Activated CD4-positive, alpha-beta T cell treated with anti-CD3 and anti-CD28 coated beads for 36 hours (primary cell): ENCODE measurements at regions of chr3 and their contacts with region 1.

Region 1: GRCh38 chr3:121735047-121735696 is 14.4 kb downstream of the GOLGB1 start:
- DNase-seq: no peak
- ATAC-seq: peak; percentile 97
- H3K4me3 Mint-ChIP-seq: no peak overlapping the region
- H3K27ac Mint-ChIP-seq: no peak overlapping the region
- H3K4me1 Mint-ChIP-seq: peaks cover 46% of the 10 kb centered on the region
- H3K27me3 Mint-ChIP-seq: no peaks in the 10 kb centered on the region

Region 2: DNA sequence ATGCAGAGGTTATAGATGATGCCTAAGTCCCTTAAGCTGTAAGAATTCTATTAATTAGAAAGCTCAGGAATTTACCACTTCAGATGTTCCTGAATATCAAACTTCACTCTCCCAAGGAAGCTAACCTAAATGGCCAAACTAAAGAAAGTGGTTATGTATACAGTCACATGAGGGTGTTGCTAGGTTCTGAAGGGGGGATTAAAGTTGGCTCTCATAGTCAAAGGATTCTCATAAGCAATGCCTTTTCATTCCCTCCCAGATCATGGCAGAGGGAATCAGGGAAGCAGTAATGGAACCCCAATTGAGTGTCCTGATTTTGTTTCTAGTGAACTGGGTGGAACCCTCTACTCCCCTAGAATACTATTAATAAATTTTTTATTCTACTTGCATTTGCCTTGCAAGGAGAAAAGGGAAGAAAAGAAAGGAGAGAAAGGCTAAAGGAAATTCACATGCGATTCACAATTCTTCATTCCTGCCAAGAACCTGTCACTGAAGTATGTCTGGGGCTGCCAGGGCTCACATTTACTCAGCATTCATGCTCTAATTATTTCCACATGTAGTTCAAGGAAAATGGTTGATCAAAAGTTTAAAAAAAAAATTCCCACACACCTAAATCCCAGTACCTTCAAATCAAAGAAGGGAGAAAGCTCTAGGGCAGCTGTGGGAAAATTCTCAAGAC is 1309.5 kb before region 1 on chr3:
- CTCF ChIA-PET with region 1: no interaction called
- POLR2A ChIA-PET with region 1: no interaction called
- intact Hi-C with region 1: no loop called
- DNase-seq: no peak
- ATAC-seq: no peak
- H3K4me3 Mint-ChIP-seq: no peak overlapping the region
- H3K27ac Mint-ChIP-seq: no peak overlapping the region
- H3K4me1 Mint-ChIP-seq: no peaks in the 10 kb centered on the region
- H3K27me3 Mint-ChIP-seq: peaks cover 7% of the 10 kb centered on the region

Region 3: GRCh38 chr3:121654493-121655385 is 80.4 kb before region 1 on chr3:
- CTCF ChIA-PET with region 1: no interaction called
- POLR2A ChIA-PET with region 1: no interaction called
- intact Hi-C with region 1: loop called in 1 of 2 experiments (anchors 5 kb)
- DNase-seq: no peak
- ATAC-seq: peak; percentile 90
- H3K4me3 Mint-ChIP-seq: peak overlapping the region; percentile 13
- H3K27ac Mint-ChIP-seq: peak overlapping the region; percentile 91
- H3K4me1 Mint-ChIP-seq: peaks cover 80% of the 10 kb centered on the region
- H3K27me3 Mint-ChIP-seq: no peaks in the 10 kb centered on the region

Region 4: GRCh38 chr3:121749276-121750086 is 14.3 kb after region 1 on chr3 and contains the start of gene GOLGB1:
- CTCF ChIA-PET with region 1: interaction called, 3 read pairs
- POLR2A ChIA-PET with region 1: no interaction called
- intact Hi-C with region 1: loop called in 1 of 2 experiments (anchors 1 kb)
- DNase-seq: peak; percentile 96
- ATAC-seq: peak; percentile 98
- H3K4me3 Mint-ChIP-seq: no peak within 1 kb of the TSS
- H3K27ac Mint-ChIP-seq: peak within 1 kb of the TSS; percentile 60
- H3K4me1 Mint-ChIP-seq: peaks cover 10% of the 10 kb centered on the region
- H3K27me3 Mint-ChIP-seq: no peaks in the 10 kb centered on the region
- total RNA-seq, gene GOLGB1: 19.0 to 19.5 TPM

Region 5: GRCh38 chr3:122208579-122208978 is 473.4 kb after region 1 on chr3:
- CTCF ChIA-PET with region 1: no interaction called
- POLR2A ChIA-PET with region 1: no interaction called
- intact Hi-C with region 1: no loop called
- DNase-seq: no peak
- ATAC-seq: no peak
- H3K4me3 Mint-ChIP-seq: no peak overlapping the region
- H3K27ac Mint-ChIP-seq: no peak overlapping the region
- H3K4me1 Mint-ChIP-seq: no peaks in the 10 kb centered on the region
- H3K27me3 Mint-ChIP-seq: peaks cover 2% of the 10 kb centered on the region